Cardiac septum (tissue), 1 donor: ENCODE measurements at regions of chr3 and their contacts with region 1.

Region 1: DNA sequence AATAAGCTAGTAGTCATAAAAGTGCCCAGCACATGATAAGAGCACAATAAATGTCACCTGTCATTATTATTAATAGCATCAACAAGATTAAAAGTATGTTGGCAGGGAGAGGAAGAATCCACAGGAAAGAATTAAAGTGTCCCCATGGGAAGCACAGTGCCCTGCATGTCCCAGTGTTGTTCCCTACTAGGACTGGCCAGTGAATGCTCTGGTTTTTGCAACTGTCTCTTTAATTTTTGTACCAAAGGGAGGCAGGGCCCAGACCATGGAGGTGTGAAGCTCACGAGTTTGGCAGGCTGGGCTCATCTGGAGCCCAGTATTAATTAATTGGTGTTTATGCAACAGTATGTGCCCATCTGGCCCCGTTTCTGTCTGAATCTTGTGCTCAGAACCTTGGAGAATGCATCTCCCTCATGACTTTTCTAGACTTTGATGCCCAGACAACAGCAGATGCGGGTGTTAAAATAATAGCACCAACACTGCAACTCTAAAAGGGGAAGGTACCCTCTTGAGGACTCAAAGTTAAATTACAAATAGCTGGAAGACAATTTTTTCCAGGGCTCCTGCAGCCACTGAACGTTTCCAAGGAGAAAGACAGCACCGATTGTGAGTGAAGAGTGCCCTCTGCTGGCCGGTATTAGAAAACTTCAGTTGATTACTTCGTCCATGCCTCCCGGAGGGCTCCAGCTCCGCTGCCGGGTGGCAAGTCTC is 71.9 kb upstream of the SPATA12 start:
- DNase-seq: peak; percentile 85

Region 2: GRCh38 chr3:56645407-56645806 is 343.2 kb before region 1 on chr3:
- intact Hi-C with region 1: no loop called
- DNase-seq: no peak

Region 3: DNA sequence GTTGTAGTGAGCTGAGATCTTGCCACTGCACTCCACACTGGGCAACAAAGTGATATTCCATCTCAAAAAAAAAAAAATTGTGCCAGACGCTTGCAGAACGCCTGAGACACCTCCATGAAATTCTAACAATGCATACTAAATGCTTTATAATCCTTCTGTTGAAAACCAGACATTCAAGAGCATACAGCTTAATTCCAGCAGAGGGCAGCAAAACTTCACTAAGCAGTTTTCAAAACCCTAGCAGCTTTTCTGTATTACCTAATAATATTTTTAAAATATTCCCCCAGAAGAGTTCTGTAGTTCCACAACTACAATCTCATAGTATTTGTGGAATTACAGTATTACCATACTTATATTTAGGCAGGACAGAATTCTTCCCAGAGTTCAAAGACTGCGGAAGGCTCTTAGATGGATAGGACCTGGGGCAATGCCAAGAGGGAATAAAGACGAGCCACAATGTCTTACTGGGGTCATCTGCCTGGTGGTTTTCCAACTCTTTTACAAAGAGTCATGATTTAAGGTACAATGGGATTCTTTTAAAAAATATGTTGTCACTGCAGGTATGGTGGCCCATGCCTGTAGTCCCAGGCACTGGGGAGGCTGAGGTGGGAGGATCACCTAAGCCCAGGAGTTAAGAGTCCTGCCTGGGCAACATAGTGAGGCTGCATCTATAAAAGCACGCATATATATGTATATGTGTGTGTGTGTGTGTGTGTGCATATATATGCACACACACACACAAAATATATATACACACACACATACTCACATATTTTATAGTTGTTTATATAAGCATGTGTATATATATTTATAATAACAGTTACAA is 285.9 kb before region 1 on chr3:
- intact Hi-C with region 1: loop called (anchors 1 kb)
- DNase-seq: no peak

Region 4: DNA sequence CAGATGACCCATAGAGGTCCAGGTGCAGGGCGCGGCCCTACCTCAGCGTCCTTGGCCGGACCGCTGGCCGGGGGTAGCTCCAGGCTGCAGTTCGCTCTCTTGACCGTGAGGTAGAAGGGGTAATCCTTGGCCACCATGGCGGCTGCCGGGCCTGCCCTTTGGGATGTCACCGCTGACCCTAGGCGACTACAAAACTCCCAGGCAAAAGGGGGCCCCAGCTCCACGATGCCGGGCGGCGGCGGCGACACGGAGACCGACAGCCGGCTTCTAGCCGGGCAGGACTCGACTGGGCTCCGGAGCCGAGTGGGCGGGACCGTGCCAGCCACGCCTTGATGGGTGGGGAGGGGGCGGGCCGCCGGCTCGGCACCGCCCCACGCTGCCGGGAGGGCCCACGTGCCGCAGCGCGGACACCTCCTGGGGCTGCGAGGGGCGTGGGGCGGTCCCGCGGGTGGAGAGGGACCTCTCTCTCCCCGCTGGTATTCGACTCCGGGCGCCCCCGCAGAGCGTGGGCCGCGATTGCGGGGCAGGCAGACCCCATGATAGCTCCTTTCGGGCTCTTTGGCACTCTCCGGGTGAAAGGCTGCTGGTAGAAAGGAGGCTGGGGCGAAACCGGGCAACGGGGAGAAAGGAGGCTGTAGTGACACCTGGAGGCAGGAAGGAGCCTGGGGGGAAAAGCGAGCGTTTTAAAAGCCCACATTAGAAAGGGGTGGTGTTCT is 186.8 kb before region 1 on chr3 and contains the start of gene ARHGEF3:
- intact Hi-C with region 1: loop called (anchors 2 kb)
- DNase-seq: peak; percentile 95
- total RNA-seq, gene ARHGEF3: 23.1 TPM

Region 5: GRCh38 chr3:56855856-56856512 is 132.6 kb before region 1 on chr3:
- intact Hi-C with region 1: loop called (anchors 2 kb)
- DNase-seq: no peak

Region 6: DNA sequence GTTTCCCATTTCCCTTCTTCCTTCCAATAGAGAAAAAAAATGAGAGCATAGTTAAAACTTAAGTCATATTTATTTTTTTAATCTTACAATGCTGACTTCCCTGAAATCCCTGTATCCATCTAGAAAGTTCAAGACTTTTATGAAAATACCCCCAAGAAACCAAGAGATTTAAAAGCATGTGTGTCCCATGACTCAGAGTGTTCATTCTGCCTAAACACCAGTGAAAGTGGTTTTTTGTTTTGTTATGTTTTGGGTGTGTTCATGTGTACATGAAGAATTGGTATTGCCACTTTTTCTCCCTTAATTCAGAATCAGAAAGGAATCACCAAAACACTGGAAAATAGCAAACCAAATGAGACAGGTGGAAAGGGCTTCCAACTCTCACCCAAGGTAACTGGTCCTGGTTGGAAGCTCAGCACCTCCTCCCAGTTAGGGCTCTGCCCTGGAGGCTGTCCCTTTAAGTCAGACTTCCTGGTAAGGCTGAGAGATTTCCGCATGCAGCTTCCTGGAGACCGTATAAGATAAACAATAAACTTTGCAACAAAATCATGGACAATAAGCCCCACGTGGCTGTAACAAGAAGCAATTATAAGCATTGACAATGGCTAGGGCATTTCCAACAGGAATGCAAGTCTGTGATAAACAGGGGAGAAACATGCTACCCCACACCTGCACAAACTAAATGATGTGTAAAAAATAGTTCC is 64.9 kb before region 1 on chr3:
- intact Hi-C with region 1: loop called (anchors 5 kb)
- DNase-seq: no peak

Region 7: DNA sequence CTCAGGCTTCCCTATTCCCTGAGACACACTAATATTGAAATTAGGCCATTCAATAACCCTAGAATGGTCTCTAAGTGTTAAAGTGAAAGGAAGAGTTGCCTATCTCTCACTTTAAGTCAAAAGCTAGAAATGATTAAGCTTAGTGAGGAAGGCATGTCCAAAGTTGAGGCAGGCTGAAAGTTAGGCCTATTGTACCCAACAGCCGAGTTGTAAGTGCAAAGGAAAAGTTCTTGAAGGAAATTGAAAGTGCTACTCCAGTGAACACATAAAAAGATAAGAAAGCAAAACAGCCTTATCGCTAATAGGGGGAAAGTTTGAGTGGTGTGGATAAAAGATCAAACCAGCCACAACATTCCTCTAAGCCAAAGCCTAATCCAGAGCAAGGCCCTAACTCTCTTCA is 46.1 kb before region 1 on chr3:
- intact Hi-C with region 1: no loop called
- DNase-seq: no peak

Region 8: GRCh38 chr3:57017459-57017845 is 28.8 kb after region 1 on chr3:
- intact Hi-C with region 1: no loop called
- DNase-seq: no peak

Region 9: GRCh38 chr3:57120040-57120439 is 131.4 kb after region 1 on chr3:
- intact Hi-C with region 1: no loop called
- DNase-seq: no peak